HAP-1 (cell line): ENCODE measurements at regions of chr11 and their contacts with region 1.

Region 1: GRCh38 chr11:87421422-87421821 is 383.7 kb downstream of the TMEM135 start:
- DNase-seq: peak; percentile 62 to 66
- H3K4me3 ChIP-seq: no peak overlapping the region
- H3K4me1 ChIP-seq: no peaks in the 10 kb centered on the region
- H3K27me3 ChIP-seq: peaks cover 19% of the 10 kb centered on the region

Region 2: GRCh38 chr11:86761978-86762377 is 659.4 kb before region 1 on chr11:
- in situ Hi-C with region 1: no loop called
- DNase-seq: no peak
- H3K4me3 ChIP-seq: no peak overlapping the region
- H3K4me1 ChIP-seq: no peaks in the 10 kb centered on the region
- H3K27me3 ChIP-seq: no peaks in the 10 kb centered on the region

Region 3: GRCh38 chr11:86938900-86939880 is 482.2 kb before region 1 on chr11:
- in situ Hi-C with region 1: loop called (anchors 10 kb)
- DNase-seq: peak; percentile 17 to 66
- H3K4me3 ChIP-seq: no peak overlapping the region
- H3K4me1 ChIP-seq: peaks cover 16% of the 10 kb centered on the region
- H3K27me3 ChIP-seq: no peaks in the 10 kb centered on the region

Region 4: DNA sequence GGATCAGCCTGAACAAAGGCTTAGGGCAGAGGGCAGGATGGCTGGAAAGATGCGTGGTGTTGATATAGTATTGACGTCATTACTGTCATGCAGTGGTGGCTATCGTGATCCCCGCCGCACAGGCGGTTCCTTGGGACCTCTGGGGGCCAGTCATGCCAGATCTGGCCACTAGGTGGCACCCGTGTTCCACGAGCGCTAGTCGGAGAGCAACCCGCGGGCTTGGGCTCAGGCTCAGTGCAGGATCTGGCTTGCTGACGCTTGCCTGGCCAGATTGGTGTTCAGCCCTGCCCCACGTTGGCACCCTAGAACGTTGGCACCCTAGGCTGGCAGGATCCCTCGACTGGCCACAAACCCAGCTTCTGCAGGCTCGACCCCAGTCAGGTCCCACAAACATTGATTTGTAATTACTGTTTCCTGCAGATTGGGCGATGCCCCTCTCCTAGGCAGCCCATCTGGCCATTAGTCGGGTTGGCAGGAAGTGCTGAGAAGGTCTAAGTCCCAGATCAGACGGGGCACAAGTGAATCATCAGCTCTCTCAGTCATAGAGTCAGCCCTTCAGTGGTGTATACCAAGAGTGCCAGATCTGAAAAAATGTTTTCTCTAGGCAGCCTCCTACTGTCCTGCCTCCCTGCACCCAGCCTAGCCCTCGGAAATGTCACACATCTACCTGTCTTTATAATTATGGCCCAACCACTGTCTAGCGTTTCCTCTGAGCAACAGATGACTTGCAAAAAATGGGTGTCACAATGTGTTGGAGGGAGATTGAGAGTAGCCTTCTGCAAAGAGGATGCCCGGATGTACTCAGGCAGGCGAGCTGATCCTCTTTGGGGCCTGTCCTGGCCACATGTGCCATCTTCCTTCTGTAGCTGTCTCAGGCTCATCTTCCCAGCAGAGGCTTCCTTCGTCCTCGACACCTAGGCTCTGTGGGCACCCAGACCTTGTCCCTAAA is 68.4 kb before region 1 on chr11:
- in situ Hi-C with region 1: loop called (anchors 5 kb)
- DNase-seq: peak; percentile 59 to 92
- H3K4me3 ChIP-seq: no peak overlapping the region
- H3K4me1 ChIP-seq: no peaks in the 10 kb centered on the region; the same call in 1 of the 2 replicates
- H3K27me3 ChIP-seq: no peaks in the 10 kb centered on the region